Caco-2 (cell line): ENCODE measurements at regions of chr21 and their contacts with region 1.

Region 1: DNA sequence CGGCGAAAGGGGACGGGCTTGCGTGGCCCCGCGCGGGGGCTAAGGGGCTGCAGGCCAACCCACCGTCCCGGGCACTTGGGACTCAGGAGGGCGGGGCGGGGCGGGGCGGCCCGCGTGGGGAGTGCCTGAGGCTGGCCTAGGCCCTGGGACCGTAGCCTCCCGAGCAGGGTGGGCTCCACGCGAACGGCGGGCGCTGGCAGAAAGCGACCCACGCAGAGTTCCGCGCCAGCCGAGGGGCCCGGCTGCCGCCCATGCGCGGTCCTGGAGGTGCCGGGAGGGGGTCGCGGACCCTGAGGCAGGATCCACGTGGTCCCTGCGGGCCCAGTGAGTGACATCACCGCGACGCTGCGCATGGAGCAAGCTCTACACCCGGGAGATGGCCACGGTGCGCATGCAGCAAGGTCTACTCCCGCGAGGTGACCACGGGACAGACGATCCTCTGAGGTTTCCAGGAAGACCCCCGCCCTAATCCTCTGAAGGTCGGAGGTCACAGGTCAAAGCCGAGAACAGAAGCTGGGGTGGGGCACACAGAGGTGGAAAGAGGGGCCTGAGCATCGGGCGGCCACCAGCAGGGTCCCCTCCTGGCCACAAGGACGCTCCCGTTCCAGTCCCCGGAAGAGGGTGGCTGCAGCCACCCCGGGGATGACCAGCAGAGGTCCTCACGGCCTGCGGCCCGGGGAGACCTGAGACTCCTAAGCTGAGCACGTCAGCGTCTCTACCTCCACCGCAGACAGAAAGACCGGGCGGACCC is 13.5 kb upstream of the SLC19A1 start:
- DNase-seq: peak; percentile 93
- H3K4me3 ChIP-seq: peak overlapping the region; percentile 57
- H3K4me3 Mint-ChIP-seq: peak overlapping the region; percentile 86
- H3K27ac Mint-ChIP-seq: peak overlapping the region; percentile 88
- H3K4me1 ChIP-seq: peaks cover 6% of the 10 kb centered on the region
- H3K4me1 Mint-ChIP-seq: peaks cover 9% of the 10 kb centered on the region
- H3K27me3 ChIP-seq: no peaks in the 10 kb centered on the region
- H3K27me3 Mint-ChIP-seq: peaks cover 3% of the 10 kb centered on the region
- CTCF ChIP-seq: peak; percentile 91 to 98

Region 2: DNA sequence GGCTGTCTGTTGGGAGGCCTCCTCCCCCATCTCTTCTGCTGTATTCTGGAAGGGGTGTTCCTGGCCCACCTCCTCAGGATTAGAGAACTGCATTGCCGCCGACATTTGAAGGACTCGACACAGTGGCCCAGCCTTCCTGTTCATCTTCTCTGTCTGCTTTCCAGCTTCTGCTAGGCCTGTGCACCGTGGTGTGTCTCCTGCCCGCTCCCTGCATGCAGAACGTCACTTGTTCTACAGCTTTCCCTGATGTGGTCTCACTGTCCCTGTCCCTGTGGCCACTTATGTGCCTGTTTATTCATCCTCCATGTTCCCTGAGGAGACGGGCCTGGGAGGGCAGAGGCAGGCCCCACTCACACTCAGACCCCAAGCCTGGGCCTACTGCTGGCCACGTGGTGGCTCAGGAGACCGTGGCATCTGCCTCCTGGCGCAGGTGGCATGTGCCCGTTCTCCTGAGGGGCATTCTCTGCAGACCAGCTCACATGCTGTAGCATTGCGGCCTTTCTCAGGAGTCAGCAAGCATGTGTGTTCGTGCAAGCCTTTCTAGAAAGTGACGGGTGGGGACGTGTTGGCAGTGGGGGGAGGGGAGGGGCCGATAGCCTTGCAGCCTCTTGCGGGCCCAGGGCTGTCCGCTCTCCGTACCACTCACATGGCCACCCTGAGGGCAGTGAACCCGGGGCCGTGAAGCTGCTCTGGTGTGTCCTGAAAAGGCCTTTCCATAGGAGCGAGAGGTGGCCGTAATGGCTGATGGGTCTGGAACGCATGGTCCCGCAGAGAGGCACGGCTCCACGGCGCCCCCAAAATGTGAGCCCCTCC is 303.9 kb before region 1 on chr21:
- CTCF ChIA-PET with region 1: no interaction called
- POLR2A ChIA-PET with region 1: no interaction called
- intact Hi-C with region 1: no loop called
- DNase-seq: no peak
- H3K4me3 ChIP-seq: no peak overlapping the region
- H3K4me3 Mint-ChIP-seq: no peak overlapping the region
- H3K27ac Mint-ChIP-seq: no peak overlapping the region
- H3K4me1 ChIP-seq: peaks cover 8% of the 10 kb centered on the region
- H3K4me1 Mint-ChIP-seq: no peaks in the 10 kb centered on the region
- H3K27me3 ChIP-seq: no peaks in the 10 kb centered on the region
- H3K27me3 Mint-ChIP-seq: no peaks in the 10 kb centered on the region
- CTCF ChIP-seq: no peak

Region 3: DNA sequence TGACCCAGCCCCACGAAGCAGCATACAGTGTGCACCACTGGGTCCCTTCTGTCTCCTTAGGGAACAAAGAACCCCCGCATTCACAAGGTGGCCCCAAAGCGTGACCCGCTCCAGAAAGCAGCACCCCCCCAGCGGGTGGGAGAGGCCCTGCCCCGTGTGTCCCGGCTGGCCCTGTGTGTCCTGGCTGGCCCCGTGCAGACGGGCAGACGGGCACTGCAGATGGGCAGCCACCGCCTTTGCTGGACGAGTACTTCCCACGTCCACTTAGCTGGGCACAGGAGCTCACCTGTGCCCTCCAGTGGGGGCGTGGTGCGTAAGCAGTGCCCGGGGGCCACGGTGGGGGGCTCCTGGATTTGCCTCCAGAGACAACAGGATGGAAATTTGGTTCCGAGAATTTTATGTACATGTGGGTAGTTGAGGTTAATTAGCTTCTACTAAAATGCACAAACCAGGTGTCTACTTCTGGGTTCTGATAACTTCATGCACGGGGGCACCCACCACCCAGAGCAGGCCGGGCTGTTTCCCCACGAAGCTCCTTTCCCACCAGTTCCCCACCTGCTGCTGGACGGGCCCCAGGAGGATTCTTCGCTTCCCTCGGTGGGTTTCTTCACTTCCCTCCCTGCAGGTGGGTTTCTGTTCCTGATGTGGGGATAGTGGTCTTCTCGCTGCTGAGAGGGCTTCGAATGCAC is 19.7 kb after region 1 on chr21:
- CTCF ChIA-PET with region 1: interaction called, 10 read pairs
- POLR2A ChIA-PET with region 1: no interaction called
- intact Hi-C with region 1: no loop called
- DNase-seq: no peak
- H3K4me3 ChIP-seq: no peak overlapping the region
- H3K4me3 Mint-ChIP-seq: no peak overlapping the region
- H3K27ac Mint-ChIP-seq: no peak overlapping the region
- H3K4me1 ChIP-seq: no peaks in the 10 kb centered on the region
- H3K4me1 Mint-ChIP-seq: no peaks in the 10 kb centered on the region
- H3K27me3 ChIP-seq: no peaks in the 10 kb centered on the region
- H3K27me3 Mint-ChIP-seq: peaks cover 10% of the 10 kb centered on the region
- CTCF ChIP-seq: no peak

Region 4: GRCh38 chr21:45596704-45597318 is 41.1 kb after region 1 on chr21:
- CTCF ChIA-PET with region 1: interaction called, 52 read pairs
- POLR2A ChIA-PET with region 1: no interaction called
- intact Hi-C with region 1: loop called (anchors 1 kb)
- DNase-seq: peak; percentile 73 to 80
- H3K4me3 ChIP-seq: no peak overlapping the region
- H3K4me3 Mint-ChIP-seq: no peak overlapping the region
- H3K27ac Mint-ChIP-seq: no peak overlapping the region
- H3K4me1 ChIP-seq: no peaks in the 10 kb centered on the region
- H3K4me1 Mint-ChIP-seq: no peaks in the 10 kb centered on the region
- H3K27me3 ChIP-seq: no peaks in the 10 kb centered on the region
- H3K27me3 Mint-ChIP-seq: peaks cover 14% of the 10 kb centered on the region
- CTCF ChIP-seq: peak; percentile 80 to 89

Region 5: GRCh38 chr21:45820171-45821091 is 264.7 kb after region 1 on chr21:
- CTCF ChIA-PET with region 1: interaction called, 34 read pairs
- POLR2A ChIA-PET with region 1: no interaction called
- intact Hi-C with region 1: loop called (anchors 1 kb)
- DNase-seq: peak; percentile 82
- H3K4me3 ChIP-seq: no peak overlapping the region
- H3K4me3 Mint-ChIP-seq: no peak overlapping the region
- H3K27ac Mint-ChIP-seq: no peak overlapping the region
- H3K4me1 ChIP-seq: peaks cover 5% of the 10 kb centered on the region; the same call in 1 of the 2 replicates
- H3K4me1 Mint-ChIP-seq: peaks cover 9% of the 10 kb centered on the region
- H3K27me3 ChIP-seq: no peaks in the 10 kb centered on the region
- H3K27me3 Mint-ChIP-seq: peaks cover 24% of the 10 kb centered on the region
- CTCF ChIP-seq: peak; percentile 82 to 84